Endothelial cell of umbilical vein (primary cell): ENCODE measurements at regions of chr17 and their contacts with region 1.

Region 1: GRCh38 chr17:3965118-3965803 is 1.0 kb upstream of the ATP2A3 start:
- DNase-seq: no peak
- H3K4me3 ChIP-seq: no peak overlapping the region
- H3K27ac ChIP-seq: no peak overlapping the region
- H3K4me1 ChIP-seq: peaks cover 4% of the 10 kb centered on the region
- H3K27me3 ChIP-seq: peaks cover 20 to 27% of the 10 kb centered on the region in 2 experiments
- CTCF ChIP-seq: no peak
- POLR2A ChIP-seq: no peak

Region 2: DNA sequence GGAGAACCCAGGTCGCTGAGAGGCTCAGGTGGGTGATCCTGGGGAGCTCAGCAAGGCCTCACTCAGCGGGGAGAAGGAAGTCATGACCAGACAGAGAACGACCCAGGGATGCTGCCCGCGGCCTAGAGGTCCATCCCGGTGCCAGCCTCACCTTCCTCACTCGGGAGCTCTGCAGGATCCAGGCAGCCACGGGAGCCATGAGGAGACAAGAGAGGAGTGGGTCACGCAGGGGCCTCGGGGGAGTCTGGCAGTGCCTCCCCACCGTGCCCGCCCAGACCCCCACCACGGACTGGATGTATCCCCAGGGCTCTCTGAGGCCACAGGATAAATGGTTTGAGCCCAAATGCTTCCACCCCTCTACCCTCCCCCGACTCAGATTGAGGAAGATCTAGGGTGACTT is 11.7 kb before region 1 on chr17:
- CTCF ChIA-PET with region 1: interaction called, 4 read pairs
- POLR2A ChIA-PET with region 1: no interaction called
- dilution Hi-C with region 1: no loop called
- intact Hi-C with region 1: loop called (anchors 1 kb)
- DNase-seq: no peak
- H3K4me3 ChIP-seq: no peak overlapping the region
- H3K27ac ChIP-seq: no peak overlapping the region
- H3K4me1 ChIP-seq: no peaks in the 10 kb centered on the region
- H3K27me3 ChIP-seq: no peaks in the 10 kb centered on the region
- CTCF ChIP-seq: no peak
- POLR2A ChIP-seq: no peak

Region 3: GRCh38 chr17:4004517-4005295 is 39.4 kb after region 1 on chr17:
- CTCF ChIA-PET with region 1: interaction called, 22 read pairs
- POLR2A ChIA-PET with region 1: no interaction called
- dilution Hi-C with region 1: no loop called
- intact Hi-C with region 1: loop called (anchors 2 kb)
- DNase-seq: peak; percentile 49
- H3K4me3 ChIP-seq: no peak overlapping the region
- H3K27ac ChIP-seq: no peak overlapping the region
- H3K4me1 ChIP-seq: peaks cover 9% of the 10 kb centered on the region
- H3K27me3 ChIP-seq: no peaks in the 10 kb centered on the region
- CTCF ChIP-seq: peak; percentile 90 to 92
- POLR2A ChIP-seq: no peak